Panc1 (cell line): ENCODE measurements at regions of chr10 and their contacts with region 1.

Region 1: DNA sequence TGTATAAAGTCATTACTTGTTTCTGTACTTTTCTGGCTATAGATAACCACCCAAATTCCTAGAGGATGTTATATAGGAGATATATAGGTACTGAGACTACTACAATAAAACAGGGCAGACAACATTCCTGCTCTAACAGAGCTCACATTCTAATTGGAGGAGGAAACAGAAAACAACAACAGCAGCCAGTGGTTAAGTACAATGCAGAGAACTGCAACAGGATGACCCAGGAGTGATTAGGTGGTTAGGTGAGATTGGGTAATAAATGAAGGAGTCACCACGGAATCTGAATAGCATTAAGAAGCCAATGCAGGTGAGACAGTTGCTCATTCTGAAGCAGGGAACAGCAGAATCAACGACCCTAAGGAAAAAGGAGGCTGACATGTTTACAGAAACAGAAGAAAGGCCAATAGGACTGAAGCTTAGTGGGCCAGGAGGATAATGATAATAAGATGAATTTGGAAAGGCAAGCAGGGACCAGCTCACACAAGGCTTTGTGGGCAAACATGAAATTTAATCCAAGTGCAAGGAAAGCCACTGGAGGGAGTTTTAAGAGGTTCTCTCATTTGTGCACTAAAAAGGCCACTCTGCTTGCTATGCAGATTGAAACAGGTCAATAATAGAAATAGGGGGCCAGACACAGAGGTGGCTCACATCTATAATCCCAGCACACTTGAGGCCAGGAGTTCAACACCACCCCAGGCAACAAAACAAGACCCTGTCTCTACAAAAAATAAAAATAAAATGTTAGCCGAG is 16.9 kb upstream of the REEP3 start:
- DNase-seq: no peak
- ATAC-seq: peak; percentile 44
- H3K4me3 ChIP-seq: no peak overlapping the region
- H3K27ac ChIP-seq: peak overlapping the region; percentile 30; the same call in 1 of the 2 replicates
- H3K4me1 ChIP-seq: peaks cover 9% of the 10 kb centered on the region
- H3K27me3 ChIP-seq: no peaks in the 10 kb centered on the region
- CTCF ChIP-seq: no peak

Region 2: GRCh38 chr10:63355682-63356081 is 148.6 kb before region 1 on chr10:
- CTCF ChIA-PET with region 1: no interaction called
- POLR2A ChIA-PET with region 1: no interaction called
- in situ Hi-C with region 1: no loop called
- intact Hi-C with region 1: no loop called
- DNase-seq: no peak
- ATAC-seq: no peak
- H3K4me3 ChIP-seq: no peak overlapping the region
- H3K27ac ChIP-seq: no peak overlapping the region
- H3K4me1 ChIP-seq: no peaks in the 10 kb centered on the region; the same call in 1 of the 2 replicates
- H3K27me3 ChIP-seq: no peaks in the 10 kb centered on the region
- CTCF ChIP-seq: no peak

Region 3: GRCh38 chr10:63376560-63377304 is 127.6 kb before region 1 on chr10:
- CTCF ChIA-PET with region 1: no interaction called
- POLR2A ChIA-PET with region 1: interaction called, 13 read pairs
- in situ Hi-C with region 1: no loop called
- intact Hi-C with region 1: no loop called
- DNase-seq: no peak
- ATAC-seq: no peak
- H3K4me3 ChIP-seq: no peak overlapping the region
- H3K27ac ChIP-seq: no peak overlapping the region
- H3K4me1 ChIP-seq: no peaks in the 10 kb centered on the region
- H3K27me3 ChIP-seq: no peaks in the 10 kb centered on the region
- CTCF ChIP-seq: no peak

Region 4: DNA sequence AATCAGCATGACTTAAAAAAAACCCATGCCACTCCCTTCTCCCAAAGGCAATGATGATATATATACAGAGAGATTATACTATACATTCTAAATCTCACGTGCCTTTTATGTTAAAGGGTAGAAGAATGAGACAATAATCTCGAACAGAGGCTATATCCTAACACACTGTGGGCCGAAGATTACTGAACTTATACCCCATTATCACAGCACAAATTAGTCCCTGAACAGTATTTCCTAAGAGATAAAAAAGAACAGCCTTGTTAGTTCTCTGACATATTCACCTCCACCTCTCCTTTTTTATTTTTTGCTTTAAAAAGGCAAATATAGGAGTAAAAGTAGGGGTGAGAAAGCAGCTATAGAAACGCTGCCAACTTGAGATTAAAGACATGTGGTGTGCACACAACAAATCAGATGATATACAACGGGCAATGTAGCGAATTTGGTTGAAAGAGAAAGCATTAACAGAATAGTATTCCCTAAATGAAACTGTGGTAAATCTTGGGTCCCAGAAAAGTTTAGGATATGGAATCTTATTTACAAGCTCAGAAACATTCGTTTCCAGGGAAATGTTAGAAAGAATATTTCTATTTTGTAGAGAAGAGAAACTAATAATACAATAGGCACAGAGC is 108.1 kb before region 1 on chr10:
- CTCF ChIA-PET with region 1: no interaction called
- POLR2A ChIA-PET with region 1: no interaction called
- in situ Hi-C with region 1: no loop called
- intact Hi-C with region 1: no loop called
- DNase-seq: no peak
- ATAC-seq: no peak
- H3K4me3 ChIP-seq: no peak overlapping the region
- H3K27ac ChIP-seq: no peak overlapping the region
- H3K4me1 ChIP-seq: no peaks in the 10 kb centered on the region
- H3K27me3 ChIP-seq: no peaks in the 10 kb centered on the region
- CTCF ChIP-seq: no peak

Region 5: DNA sequence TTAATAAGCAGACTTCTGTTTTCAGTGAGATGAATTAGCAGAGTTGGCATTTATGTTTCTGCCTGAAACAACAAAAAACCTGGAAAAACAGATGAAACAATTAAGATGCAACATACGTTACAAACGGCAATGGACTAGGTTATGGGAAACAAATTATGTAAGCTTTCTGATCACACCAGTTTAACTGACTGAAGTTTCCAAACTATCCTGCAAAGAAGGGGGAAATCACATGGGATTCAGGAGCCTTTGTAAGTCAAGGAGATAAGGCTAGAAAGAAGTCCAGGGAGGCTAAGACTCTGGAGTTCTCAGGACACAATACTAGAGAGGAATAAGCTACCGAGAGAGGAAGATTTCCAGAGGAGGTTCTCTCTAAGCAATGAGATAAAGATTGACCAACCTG is 70.1 kb before region 1 on chr10:
- CTCF ChIA-PET with region 1: no interaction called
- POLR2A ChIA-PET with region 1: interaction called, 11 read pairs
- in situ Hi-C with region 1: no loop called
- intact Hi-C with region 1: no loop called
- DNase-seq: no peak
- ATAC-seq: no peak
- H3K4me3 ChIP-seq: no peak overlapping the region
- H3K27ac ChIP-seq: no peak overlapping the region
- H3K4me1 ChIP-seq: peaks cover 46% of the 10 kb centered on the region
- H3K27me3 ChIP-seq: no peaks in the 10 kb centered on the region
- CTCF ChIP-seq: no peak

Region 6: GRCh38 chr10:63446716-63447440 is 57.4 kb before region 1 on chr10:
- CTCF ChIA-PET with region 1: no interaction called
- POLR2A ChIA-PET with region 1: no interaction called
- in situ Hi-C with region 1: no loop called
- intact Hi-C with region 1: no loop called
- DNase-seq: no peak
- ATAC-seq: no peak
- H3K4me3 ChIP-seq: no peak overlapping the region
- H3K27ac ChIP-seq: no peak overlapping the region
- H3K4me1 ChIP-seq: no peaks in the 10 kb centered on the region
- H3K27me3 ChIP-seq: no peaks in the 10 kb centered on the region
- CTCF ChIP-seq: no peak

Region 7: GRCh38 chr10:63547628-63548360 is 43.5 kb after region 1 on chr10:
- CTCF ChIA-PET with region 1: no interaction called
- POLR2A ChIA-PET with region 1: no interaction called
- in situ Hi-C with region 1: no loop called
- intact Hi-C with region 1: no loop called
- DNase-seq: no peak
- ATAC-seq: no peak
- H3K4me3 ChIP-seq: no peak overlapping the region
- H3K27ac ChIP-seq: no peak overlapping the region
- H3K4me1 ChIP-seq: peaks cover 25% of the 10 kb centered on the region
- H3K27me3 ChIP-seq: no peaks in the 10 kb centered on the region
- CTCF ChIP-seq: no peak